Right cardiac atrium (tissue), 5 donors: ENCODE measurements at regions of chr1 and their contacts with region 1.

Region 1: GRCh38 chr1:212630158-212630900 is 21.8 kb downstream of the ATF3 start:
- DNase-seq: peak; percentile 44 to 82 (median 76)
- ATAC-seq: peak; percentile 86 to 88
- H3K4me3 ChIP-seq: no peak overlapping the region
- H3K27ac ChIP-seq: no peak overlapping the region
- H3K4me1 ChIP-seq: peaks cover 4% of the 10 kb centered on the region
- H3K27me3 ChIP-seq: no peaks in the 10 kb centered on the region

Region 2: DNA sequence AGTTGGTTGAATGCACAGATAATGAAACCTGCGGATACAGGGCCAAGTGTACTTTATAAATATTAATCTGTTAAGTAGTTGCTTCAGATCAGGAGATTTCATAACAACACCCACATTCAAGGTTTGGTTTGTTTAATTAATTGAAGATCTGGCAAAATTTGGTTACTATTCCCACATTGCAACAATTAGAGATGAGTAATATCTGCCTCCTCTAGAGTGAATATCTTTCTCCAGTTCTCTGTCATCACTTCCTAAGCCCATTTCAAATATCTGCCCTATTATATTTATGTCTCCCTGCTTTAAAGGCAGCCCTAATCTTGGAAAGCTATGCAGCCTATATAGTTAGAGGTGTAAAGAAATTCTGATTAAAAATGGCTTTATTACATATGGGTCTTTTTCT is 283.7 kb before region 1 on chr1:
- intact Hi-C with region 1: no loop called
- DNase-seq: no peak
- ATAC-seq: no peak
- H3K4me3 ChIP-seq: no peak overlapping the region
- H3K27ac ChIP-seq: no peak overlapping the region
- H3K4me1 ChIP-seq: peaks cover 2% of the 10 kb centered on the region
- H3K27me3 ChIP-seq: no peaks in the 10 kb centered on the region

Region 3: GRCh38 chr1:212467843-212468482 is 162.4 kb before region 1 on chr1:
- intact Hi-C with region 1: no loop called
- DNase-seq: no peak
- ATAC-seq: no peak
- H3K4me3 ChIP-seq: no peak overlapping the region
- H3K27ac ChIP-seq: no peak overlapping the region
- H3K4me1 ChIP-seq: no peaks in the 10 kb centered on the region
- H3K27me3 ChIP-seq: no peaks in the 10 kb centered on the region

Region 4: GRCh38 chr1:212488397-212489283 is 141.7 kb before region 1 on chr1:
- intact Hi-C with region 1: loop called in 1 of 4 experiments (anchors 5 kb)
- DNase-seq: peak in 2 of 3 donors; percentile 46 to 57
- ATAC-seq: peak; percentile 60 to 64
- H3K4me3 ChIP-seq: no peak overlapping the region
- H3K27ac ChIP-seq: no peak overlapping the region
- H3K4me1 ChIP-seq: no peaks in the 10 kb centered on the region
- H3K27me3 ChIP-seq: no peaks in the 10 kb centered on the region